ENCODE measurements at regions of chr4 and their contacts with region 1.

Region 1: GRCh38 chr4:87973283-87974169 is 2.0 kb upstream of the SPP1 start:
- DNase-seq: peak; percentile 66
- ATAC-seq: peak; percentile 59
- H3K4me3 Mint-ChIP-seq: peak overlapping the region; percentile 55
- H3K27ac Mint-ChIP-seq: peak overlapping the region; percentile 93
- H3K4me1 Mint-ChIP-seq: peaks cover 48% of the 10 kb centered on the region
- H3K27me3 Mint-ChIP-seq: no peaks in the 10 kb centered on the region
- CTCF ChIP-seq: peak; percentile 78

Region 2: GRCh38 chr4:87856816-87857215 is 116.7 kb before region 1 on chr4:
- CTCF ChIA-PET with region 1: interaction called, 22 read pairs
- POLR2A ChIA-PET with region 1: no interaction called
- DNase-seq: no peak
- ATAC-seq: peak; percentile 42
- H3K4me3 Mint-ChIP-seq: no peak overlapping the region
- H3K27ac Mint-ChIP-seq: no peak overlapping the region
- H3K4me1 Mint-ChIP-seq: peaks cover 44% of the 10 kb centered on the region
- H3K27me3 Mint-ChIP-seq: no peaks in the 10 kb centered on the region; the same call in 1 of the 2 replicates
- CTCF ChIP-seq: no peak

Region 3: GRCh38 chr4:87961993-87962392 is 11.5 kb before region 1 on chr4:
- CTCF ChIA-PET with region 1: interaction called, 16 read pairs
- POLR2A ChIA-PET with region 1: no interaction called
- DNase-seq: no peak
- ATAC-seq: no peak
- H3K4me3 Mint-ChIP-seq: no peak overlapping the region
- H3K27ac Mint-ChIP-seq: no peak overlapping the region
- H3K4me1 Mint-ChIP-seq: no peaks in the 10 kb centered on the region
- H3K27me3 Mint-ChIP-seq: peaks cover 9% of the 10 kb centered on the region
- CTCF ChIP-seq: no peak

Region 4: DNA sequence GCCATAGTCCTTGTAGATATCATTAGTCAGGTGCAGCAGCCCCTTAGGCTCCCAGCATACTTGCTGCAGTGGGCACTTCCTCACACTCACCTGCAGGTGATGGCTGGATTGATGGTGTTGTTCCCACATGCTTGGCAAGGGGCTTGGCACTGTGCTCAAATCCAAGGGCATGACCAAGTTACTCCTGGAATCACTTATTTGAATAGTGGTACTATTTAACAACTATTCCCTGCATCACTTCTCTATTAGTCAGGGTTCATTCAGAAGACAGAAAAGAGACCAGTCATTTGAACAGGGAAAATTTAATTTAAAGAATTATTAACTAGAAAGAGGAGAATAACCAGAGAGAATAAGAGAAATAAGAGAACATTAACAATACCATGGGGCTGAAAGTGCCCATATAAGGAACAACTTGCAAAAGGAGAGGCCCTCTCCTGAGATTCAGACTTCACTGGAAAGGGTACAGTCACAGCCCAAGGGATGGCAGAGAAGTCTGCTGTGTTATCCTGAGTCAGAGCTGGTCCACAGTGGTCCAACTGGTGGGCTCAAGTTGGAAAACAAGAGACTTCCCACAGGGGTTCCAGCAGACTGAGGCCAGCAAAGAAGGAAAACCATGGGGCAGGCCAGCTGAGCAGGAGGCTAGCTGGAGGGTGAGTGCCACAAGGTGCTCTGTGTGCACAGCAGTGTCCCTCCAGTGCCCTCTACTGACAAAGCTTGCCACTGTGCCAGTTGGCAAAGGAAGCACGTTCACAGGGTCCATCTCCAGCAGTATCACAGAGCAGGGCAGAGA is 11.8 kb after region 1 on chr4:
- CTCF ChIA-PET with region 1: interaction called, 40 read pairs
- POLR2A ChIA-PET with region 1: no interaction called
- DNase-seq: peak; percentile 74
- ATAC-seq: peak; percentile 100
- H3K4me3 Mint-ChIP-seq: no peak overlapping the region
- H3K27ac Mint-ChIP-seq: no peak overlapping the region
- H3K4me1 Mint-ChIP-seq: peaks cover 4% of the 10 kb centered on the region
- H3K27me3 Mint-ChIP-seq: no peaks in the 10 kb centered on the region
- CTCF ChIP-seq: 0 out of 2 replicates have a peak, but pooled peaks have one; percentile 32

Region 5: GRCh38 chr4:88021824-88022223 is 48.3 kb after region 1 on chr4:
- CTCF ChIA-PET with region 1: no interaction called
- POLR2A ChIA-PET with region 1: no interaction called
- DNase-seq: no peak
- ATAC-seq: no peak
- H3K4me3 Mint-ChIP-seq: no peak overlapping the region
- H3K27ac Mint-ChIP-seq: no peak overlapping the region
- H3K4me1 Mint-ChIP-seq: peaks cover 16% of the 10 kb centered on the region
- H3K27me3 Mint-ChIP-seq: no peaks in the 10 kb centered on the region; the same call in 1 of the 2 replicates
- CTCF ChIP-seq: no peak

Region 6: GRCh38 chr4:88378691-88379559 is 405.4 kb after region 1 on chr4 and contains the start of gene HERC6:
- CTCF ChIA-PET with region 1: no interaction called
- POLR2A ChIA-PET with region 1: no interaction called
- DNase-seq: peak; percentile 81
- ATAC-seq: peak; percentile 95
- H3K4me3 Mint-ChIP-seq: peak within 1 kb of the TSS; percentile 81
- H3K27ac Mint-ChIP-seq: peak within 1 kb of the TSS; percentile 95
- H3K4me1 Mint-ChIP-seq: 0 out of 2 replicates have a peak, but pooled peaks cover 5% of the 10 kb centered on the region
- H3K27me3 Mint-ChIP-seq: peaks cover 17% of the 10 kb centered on the region
- CTCF ChIP-seq: peak; percentile 34
- total RNA-seq, gene HERC6: 4.1 to 6.7 TPM (median 6.1 TPM) in 3 replicates